Naive thymus-derived CD4-positive, alpha-beta T cell (primary cell): ENCODE measurements at regions of chr12 and their contacts with region 1.

Region 1: DNA sequence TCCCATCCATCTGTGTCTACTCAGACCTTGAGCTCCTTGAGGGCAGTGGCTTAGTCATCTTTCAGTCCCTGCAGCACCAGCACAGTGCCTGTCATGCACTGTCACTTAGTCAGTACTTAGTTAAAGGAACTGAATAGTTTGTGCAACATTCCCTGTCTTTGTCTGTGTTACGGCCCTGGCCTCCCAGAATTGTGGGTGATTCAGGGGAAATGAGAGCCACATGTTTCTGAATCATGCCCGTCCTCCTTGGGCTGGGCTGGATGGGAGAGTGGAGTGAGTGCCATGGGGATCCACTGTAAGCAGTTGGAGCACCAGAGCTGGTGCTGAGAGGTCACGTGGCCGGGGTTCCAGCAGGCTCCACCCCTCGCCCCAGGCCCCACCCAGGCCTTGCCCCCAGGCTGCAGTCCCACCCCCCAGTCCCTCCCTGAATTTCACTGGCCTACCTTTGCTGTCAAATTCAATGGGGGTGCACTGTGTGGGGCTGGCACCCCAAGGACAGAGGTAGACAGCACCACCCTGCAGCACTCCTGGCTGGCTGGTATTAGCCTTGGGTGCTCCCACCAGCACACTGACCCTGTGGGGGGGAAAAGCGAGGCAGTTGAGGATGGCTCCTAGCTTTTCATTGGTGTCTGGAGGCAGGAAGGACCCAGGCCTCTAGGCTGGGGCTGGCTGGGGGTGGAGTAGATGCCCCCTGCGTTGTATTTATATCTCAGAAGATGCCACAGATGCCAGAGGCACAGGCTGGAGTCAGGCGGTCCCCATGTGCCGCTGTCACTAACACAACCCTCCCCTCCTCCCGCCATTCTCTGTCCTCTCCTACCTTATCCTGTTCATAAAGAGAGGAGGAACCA is 7.5 kb downstream of the ITGA5 start:
- DNase-seq: peak; percentile 44 to 66 (median 58)
- ATAC-seq: peak; percentile 72
- H3K4me3 ChIP-seq: peak overlapping the region; percentile 84
- H3K4me3 Mint-ChIP-seq: peak overlapping the region; percentile 80 to 92 (median 87)
- H3K27ac ChIP-seq: peak overlapping the region; percentile 96
- H3K27ac Mint-ChIP-seq: peak overlapping the region; percentile 89 to 100 (median 98)
- H3K4me1 ChIP-seq: peaks cover 58 to 66% of the 10 kb centered on the region in 2 donors
- H3K4me1 Mint-ChIP-seq: peaks cover 46 to 97% (median 72%) of the 10 kb centered on the region in 7 donors
- H3K27me3 ChIP-seq: no peaks in the 10 kb centered on the region
- H3K27me3 Mint-ChIP-seq: no peaks in the 10 kb centered on the region

Region 2: GRCh38 chr12:54398995-54399793 is 12.4 kb before region 1 on chr12:
- CTCF ChIA-PET with region 1: interaction called, 162 read pairs
- POLR2A ChIA-PET with region 1: interaction called, 31 read pairs
- intact Hi-C with region 1: loop called (anchors 1 kb)
- DNase-seq: peak; percentile 76 to 94 (median 84)
- ATAC-seq: peak; percentile 96
- H3K4me3 ChIP-seq: no peak overlapping the region
- H3K4me3 Mint-ChIP-seq: no peak overlapping the region
- H3K27ac ChIP-seq: no peak overlapping the region
- H3K27ac Mint-ChIP-seq: peak overlapping the region in 7 of 9 donors; percentile 5 to 74 (median 52)
- H3K4me1 ChIP-seq: no peaks in the 10 kb centered on the region
- H3K4me1 Mint-ChIP-seq: peaks cover 13 to 31% (median 16%) of the 10 kb centered on the region in 7 donors
- H3K27me3 ChIP-seq: no peaks in the 10 kb centered on the region
- H3K27me3 Mint-ChIP-seq: no peaks in the 10 kb centered on the region

Region 3: GRCh38 chr12:54431911-54432814 is 20.5 kb after region 1 on chr12:
- CTCF ChIA-PET with region 1: interaction called, 452 read pairs
- POLR2A ChIA-PET with region 1: interaction called, 27 read pairs
- intact Hi-C with region 1: no loop called
- DNase-seq: peak in 1 of 9 donors; percentile 49
- ATAC-seq: no peak
- H3K4me3 ChIP-seq: no peak overlapping the region
- H3K4me3 Mint-ChIP-seq: peak overlapping the region in 2 of 10 donors; percentile 5 to 80
- H3K27ac ChIP-seq: no peak overlapping the region
- H3K27ac Mint-ChIP-seq: peak overlapping the region in 5 of 9 donors; percentile 7 to 87 (median 49)
- H3K4me1 ChIP-seq: peaks cover 13 to 23% of the 10 kb centered on the region in 2 donors
- H3K4me1 Mint-ChIP-seq: peaks cover 20 to 56% (median 38%) of the 10 kb centered on the region in 7 donors
- H3K27me3 ChIP-seq: no peaks in the 10 kb centered on the region
- H3K27me3 Mint-ChIP-seq: peaks cover 0 to 13% (median 0%) of the 10 kb centered on the region in 5 donors

Region 4: DNA sequence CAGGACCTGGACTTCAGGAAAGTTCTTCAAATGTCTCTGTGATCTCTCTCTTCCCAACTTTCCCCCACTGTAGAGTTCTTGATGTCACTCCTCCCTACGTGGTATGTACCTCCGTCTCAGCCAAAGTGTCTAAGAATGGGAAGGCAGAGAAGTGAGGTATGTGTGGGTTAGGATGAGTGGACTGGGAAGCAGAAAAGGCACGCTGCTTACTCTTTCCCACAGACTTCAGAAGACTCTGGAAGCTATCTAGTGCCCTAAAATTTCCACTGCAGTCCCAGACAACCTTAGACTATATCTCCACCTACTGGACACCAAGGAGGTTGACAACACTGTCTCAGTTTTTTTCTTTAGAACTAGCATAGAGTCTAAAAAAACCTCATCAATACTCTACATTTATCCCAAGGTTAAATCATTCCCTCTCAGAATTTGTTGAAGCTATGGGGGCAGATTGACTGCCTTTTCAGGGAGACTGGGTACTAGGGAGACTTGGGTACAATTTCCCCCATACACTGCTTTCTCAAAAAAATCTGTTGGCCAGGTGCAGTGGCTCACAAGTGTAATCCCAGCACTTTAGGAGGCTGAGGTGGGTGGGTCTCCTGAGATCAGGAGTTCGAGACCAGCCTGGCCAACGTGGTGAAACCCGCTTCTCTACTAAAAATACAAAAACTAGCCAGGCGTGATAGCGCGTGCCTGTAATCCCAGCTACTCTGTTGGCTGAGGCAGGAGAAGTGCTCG is 28.1 kb after region 1 on chr12:
- CTCF ChIA-PET with region 1: interaction called, 452 read pairs
- POLR2A ChIA-PET with region 1: interaction called, 27 read pairs
- intact Hi-C with region 1: loop called (anchors 1 kb)
- DNase-seq: peak in 7 of 9 donors; percentile 24 to 68 (median 62)
- ATAC-seq: peak; percentile 97
- H3K4me3 ChIP-seq: no peak overlapping the region
- H3K4me3 Mint-ChIP-seq: peak overlapping the region in 2 of 10 donors; percentile 14 to 21
- H3K27ac ChIP-seq: no peak overlapping the region
- H3K27ac Mint-ChIP-seq: peak overlapping the region in 7 of 9 donors; percentile 9 to 78 (median 29)
- H3K4me1 ChIP-seq: peaks cover 0 to 3% of the 10 kb centered on the region in 2 donors
- H3K4me1 Mint-ChIP-seq: peaks cover 4 to 24% (median 6%) of the 10 kb centered on the region in 7 donors
- H3K27me3 ChIP-seq: no peaks in the 10 kb centered on the region
- H3K27me3 Mint-ChIP-seq: peaks cover 0 to 32% (median 0%) of the 10 kb centered on the region in 5 donors

Region 5: GRCh38 chr12:54497883-54498282 is 86.3 kb after region 1 on chr12:
- CTCF ChIA-PET with region 1: interaction called, 4 read pairs
- POLR2A ChIA-PET with region 1: interaction called, 10 read pairs
- intact Hi-C with region 1: loop called (anchors 1 kb)
- DNase-seq: no peak
- ATAC-seq: peak; percentile 3
- H3K4me3 ChIP-seq: peak overlapping the region; percentile 89
- H3K4me3 Mint-ChIP-seq: peak overlapping the region; percentile 97 to 99 (median 98)
- H3K27ac ChIP-seq: peak overlapping the region; percentile 77
- H3K27ac Mint-ChIP-seq: peak overlapping the region; percentile 88 to 98 (median 96)
- H3K4me1 ChIP-seq: peaks cover 19 to 31% of the 10 kb centered on the region in 2 donors
- H3K4me1 Mint-ChIP-seq: peaks cover 30 to 58% (median 41%) of the 10 kb centered on the region in 7 donors
- H3K27me3 ChIP-seq: no peaks in the 10 kb centered on the region
- H3K27me3 Mint-ChIP-seq: no peaks in the 10 kb centered on the region

Region 6: GRCh38 chr12:54560374-54560858 is 148.8 kb after region 1 on chr12:
- CTCF ChIA-PET with region 1: no interaction called
- POLR2A ChIA-PET with region 1: no interaction called
- intact Hi-C with region 1: loop called in 1 of 2 experiments (anchors 5 kb)
- DNase-seq: peak; percentile 71 to 94 (median 86)
- ATAC-seq: peak; percentile 100
- H3K4me3 ChIP-seq: peak overlapping the region; percentile 72
- H3K4me3 Mint-ChIP-seq: peak overlapping the region; percentile 81 to 97 (median 90)
- H3K27ac ChIP-seq: peak overlapping the region; percentile 76
- H3K27ac Mint-ChIP-seq: peak overlapping the region; percentile 82 to 99 (median 92)
- H3K4me1 ChIP-seq: peaks cover 5 to 9% of the 10 kb centered on the region in 2 donors
- H3K4me1 Mint-ChIP-seq: peaks cover 20 to 42% (median 29%) of the 10 kb centered on the region in 7 donors
- H3K27me3 ChIP-seq: no peaks in the 10 kb centered on the region
- H3K27me3 Mint-ChIP-seq: no peaks in the 10 kb centered on the region